ENCODE measurements at regions of chr17 and their contacts with region 1.

Region 1: DNA sequence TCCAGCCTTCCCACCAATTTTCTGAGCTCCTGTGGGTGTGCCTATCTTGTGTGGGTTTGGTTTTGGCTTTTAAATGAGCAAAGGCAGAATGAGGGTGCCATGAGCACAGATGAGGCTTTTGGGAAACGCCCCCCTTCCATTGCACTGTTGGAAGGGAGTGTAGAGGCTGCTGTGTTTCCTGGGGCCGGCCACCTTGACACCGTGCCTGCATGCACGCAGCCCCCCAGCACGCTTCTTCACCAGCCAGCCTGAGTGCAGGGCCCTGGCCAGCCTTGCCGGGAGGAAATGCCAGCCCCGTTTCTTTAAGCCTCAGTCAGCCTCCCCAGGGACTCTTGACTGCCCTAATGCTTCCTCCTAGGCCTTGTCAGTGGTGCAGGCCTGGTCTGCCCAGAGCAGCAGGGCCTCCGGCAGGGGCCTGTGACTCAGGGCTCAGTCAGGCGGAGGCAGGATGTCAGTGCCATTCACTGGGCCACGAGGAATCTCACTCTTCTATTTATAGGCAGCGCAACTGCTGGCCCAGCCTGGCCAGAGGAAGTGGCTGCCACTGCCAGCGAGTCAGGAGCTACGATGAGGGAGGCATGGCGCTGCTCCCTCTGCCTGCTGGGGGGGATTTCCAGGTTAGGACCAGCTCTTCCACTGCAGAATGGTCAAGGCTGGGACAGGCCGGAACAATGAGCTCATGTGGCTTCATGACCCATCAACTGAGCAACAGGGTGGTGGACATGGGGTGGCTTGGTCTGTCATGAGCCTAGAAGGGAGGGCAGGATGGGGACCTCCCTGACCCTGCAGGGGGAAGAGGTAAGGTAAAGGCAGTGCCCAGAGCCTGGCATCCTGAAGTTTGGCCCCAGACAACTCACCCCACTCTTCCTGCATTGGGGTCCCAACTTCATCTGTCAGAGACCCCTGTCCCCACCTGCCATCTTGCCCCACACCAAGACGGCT is 205.2 kb downstream of the RAB11FIP4 start:
- DNase-seq: peak; percentile 93 to 98
- H3K4me3 ChIP-seq: no peak overlapping the region
- H3K27ac ChIP-seq: peak overlapping the region; percentile 87 to 93
- H3K4me1 ChIP-seq: peaks cover 23 to 43% of the 10 kb centered on the region in 2 donors
- H3K27me3 ChIP-seq: no peaks in the 10 kb centered on the region
- CTCF ChIP-seq: peak in 1 of 3 experiments; percentile 20

Region 2: DNA sequence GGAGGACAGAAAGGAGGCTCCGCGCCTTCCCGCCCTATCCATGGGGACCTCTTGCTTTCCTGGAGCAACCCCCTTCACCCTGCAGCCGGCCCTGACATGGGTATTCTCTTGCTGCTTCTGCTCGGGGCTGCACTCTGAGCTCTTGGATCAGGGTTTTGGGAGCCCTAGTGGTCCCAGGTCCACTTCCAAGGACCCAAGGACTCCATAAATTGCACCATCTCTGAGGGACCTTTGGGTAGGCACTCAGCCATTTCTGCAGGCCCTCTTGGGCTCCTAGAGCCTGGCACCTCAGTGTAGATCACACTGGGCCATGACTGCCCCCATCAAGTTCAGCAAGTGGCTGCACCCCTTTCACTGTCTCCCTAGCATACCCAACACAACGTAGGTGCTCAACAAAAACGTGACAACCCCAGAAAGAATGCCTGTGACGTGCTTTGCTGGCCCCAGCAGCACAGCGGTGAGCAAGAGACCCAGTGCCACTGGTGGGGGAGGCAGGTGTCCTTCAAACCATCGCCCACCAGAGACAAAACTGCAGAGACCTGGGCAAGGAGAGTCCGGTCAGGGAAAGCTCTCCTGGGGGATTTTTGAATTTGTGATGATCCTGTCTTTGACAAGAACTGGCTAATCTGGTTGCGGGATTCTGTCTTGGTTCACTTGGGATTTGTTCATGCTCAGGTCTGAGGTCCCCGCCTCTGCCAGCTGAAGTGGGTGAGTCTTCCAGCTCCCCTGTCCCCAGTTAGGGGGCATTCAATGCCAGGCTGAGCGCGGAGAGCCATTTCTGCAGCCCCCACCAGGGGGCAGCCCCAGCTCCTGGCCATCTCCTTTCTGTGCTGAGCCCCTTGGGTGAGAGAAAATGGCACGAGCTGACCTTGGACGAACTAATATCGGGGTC is 207.6 kb before region 1 on chr17:
- intact Hi-C with region 1: no loop called
- DNase-seq: no peak
- H3K4me3 ChIP-seq: no peak overlapping the region
- H3K27ac ChIP-seq: no peak overlapping the region
- H3K4me1 ChIP-seq: peaks cover 4 to 6% of the 10 kb centered on the region in 2 donors
- H3K27me3 ChIP-seq: peaks cover 7% of the 10 kb centered on the region
- CTCF ChIP-seq: peak in 2 of 3 experiments; percentile 32 to 57

Region 3: GRCh38 chr17:31570951-31571892 is 25.4 kb before region 1 on chr17:
- intact Hi-C with region 1: loop called (anchors 1 kb)
- DNase-seq: peak in 1 of 2 donors; percentile 92
- H3K4me3 ChIP-seq: no peak overlapping the region
- H3K27ac ChIP-seq: peak overlapping the region; percentile 83 to 91
- H3K4me1 ChIP-seq: peaks cover 16 to 63% of the 10 kb centered on the region in 2 donors
- H3K27me3 ChIP-seq: no peaks in the 10 kb centered on the region
- CTCF ChIP-seq: no peak

Region 4: GRCh38 chr17:31581022-31581490 is 15.6 kb before region 1 on chr17:
- intact Hi-C with region 1: loop called (anchors 2 kb)
- DNase-seq: peak in 1 of 2 donors; percentile 90
- H3K4me3 ChIP-seq: peak overlapping the region in 1 of 2 donors; percentile 52
- H3K27ac ChIP-seq: peak overlapping the region; percentile 89
- H3K4me1 ChIP-seq: peaks cover 22 to 48% of the 10 kb centered on the region in 2 donors
- H3K27me3 ChIP-seq: no peaks in the 10 kb centered on the region
- CTCF ChIP-seq: no peak

Region 5: DNA sequence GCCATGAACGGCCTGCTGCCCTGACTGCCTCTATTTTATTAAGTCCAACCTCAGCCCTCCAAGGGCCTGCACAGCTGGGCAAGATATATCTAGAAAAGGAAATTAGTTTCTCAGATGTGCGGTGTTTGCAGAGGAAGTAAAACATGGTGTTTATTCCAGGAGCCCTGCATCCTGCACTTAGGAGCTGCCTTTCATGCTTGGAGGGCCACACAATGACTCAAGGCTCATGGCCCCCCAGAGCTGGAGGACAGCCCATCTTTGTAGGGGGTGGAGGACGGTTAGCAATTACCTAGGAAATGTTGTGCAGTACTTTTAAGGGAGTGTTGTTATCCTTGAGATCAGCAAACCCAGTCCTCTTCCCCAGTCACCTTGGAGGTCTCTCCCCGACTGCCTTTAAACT is 181.9 kb after region 1 on chr17:
- intact Hi-C with region 1: loop called (anchors 2 kb)
- DNase-seq: no peak
- H3K4me3 ChIP-seq: no peak overlapping the region
- H3K27ac ChIP-seq: no peak overlapping the region
- H3K4me1 ChIP-seq: no peaks in the 10 kb centered on the region
- H3K27me3 ChIP-seq: no peaks in the 10 kb centered on the region
- CTCF ChIP-seq: no peak

Region 6: DNA sequence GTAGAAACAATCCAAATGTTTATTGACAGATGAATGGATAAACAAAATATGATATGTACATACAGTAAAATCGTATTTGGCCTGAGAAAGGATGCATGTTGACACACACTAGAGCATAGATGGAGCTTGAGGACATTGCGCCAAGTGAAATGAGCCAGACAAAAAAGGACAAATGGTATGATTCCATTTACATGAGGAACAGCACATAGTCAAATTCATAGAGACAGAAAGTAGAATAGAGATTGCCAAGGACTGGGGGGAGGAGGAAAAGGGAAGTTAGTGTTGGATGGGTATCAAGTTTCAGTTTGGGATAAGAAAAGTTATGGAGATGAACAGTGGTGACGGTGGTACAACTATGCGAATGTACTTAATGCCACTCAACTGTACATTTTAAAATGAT is 214.4 kb after region 1 on chr17:
- intact Hi-C with region 1: no loop called
- DNase-seq: no peak
- H3K4me3 ChIP-seq: peak overlapping the region in 1 of 2 donors; percentile 46
- H3K27ac ChIP-seq: peak overlapping the region; percentile 64 to 70
- H3K4me1 ChIP-seq: peaks cover 4 to 9% of the 10 kb centered on the region in 2 donors
- H3K27me3 ChIP-seq: no peaks in the 10 kb centered on the region
- CTCF ChIP-seq: no peak

Region 7: GRCh38 chr17:32349854-32350665 is 753.4 kb after region 1 on chr17 and contains the start of gene ZNF207:
- intact Hi-C with region 1: no loop called
- DNase-seq: peak; percentile 71 to 97
- H3K4me3 ChIP-seq: peak within 1 kb of the TSS; percentile 66 to 73
- H3K27ac ChIP-seq: peak within 1 kb of the TSS; percentile 94 to 96
- H3K4me1 ChIP-seq: peaks cover 12 to 22% of the 10 kb centered on the region in 2 donors
- H3K27me3 ChIP-seq: no peaks in the 10 kb centered on the region
- CTCF ChIP-seq: no peak
- total RNA-seq, gene ZNF207: 94.2 TPM

Measured in ascending aorta (tissue), 2 donors.